ENCODE measurements at regions of chr9 and their contacts with region 1.

Region 1: DNA sequence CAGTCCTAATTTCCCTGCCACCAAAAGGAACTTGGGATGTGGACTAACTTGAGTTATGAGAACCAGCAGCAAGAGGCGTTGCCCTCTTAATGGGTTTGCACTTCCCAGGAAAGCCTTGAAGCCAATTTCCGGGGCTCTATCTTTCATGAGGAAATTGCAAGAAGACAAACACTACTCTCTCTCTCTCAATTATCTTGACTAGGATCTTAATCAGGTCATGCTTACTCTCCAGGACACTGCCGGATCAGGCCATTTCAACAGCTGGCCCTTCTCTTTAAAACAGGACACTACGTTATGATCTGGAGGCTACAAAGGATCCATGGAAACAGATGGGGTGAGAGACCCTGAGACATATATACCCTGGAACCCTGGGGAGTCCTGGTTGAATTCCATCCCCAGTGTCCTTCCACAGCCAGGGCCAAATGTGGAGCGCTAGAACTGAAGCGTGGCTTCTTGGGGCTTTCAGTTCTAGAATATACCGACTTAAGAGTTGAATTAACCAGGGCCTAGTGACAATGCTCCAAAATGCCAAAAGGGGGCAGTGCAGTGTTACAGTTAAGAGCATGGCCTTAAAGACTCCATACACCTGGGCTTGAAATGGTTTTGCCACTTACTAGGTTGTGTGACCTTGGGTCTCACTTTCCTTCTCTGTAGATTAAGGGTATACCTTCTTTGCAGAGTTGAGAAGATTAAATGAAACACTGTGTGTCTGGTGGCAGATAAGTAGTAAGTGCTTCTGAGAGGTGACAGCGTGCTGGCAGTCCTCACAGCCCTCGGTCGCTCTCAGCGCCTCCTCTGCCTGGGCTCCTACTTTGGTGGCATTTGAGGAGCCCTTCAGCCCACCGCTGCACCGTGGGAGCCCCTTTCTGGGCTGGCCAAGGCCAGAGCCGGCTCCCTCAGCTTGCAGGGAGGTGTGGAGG is 21.1 kb downstream of the FAM219A start:
- DNase-seq: peak; percentile 79
- ATAC-seq: peak; percentile 92
- H3K4me3 ChIP-seq: no peak overlapping the region
- H3K27ac ChIP-seq: no peak overlapping the region
- H3K4me1 ChIP-seq: peaks cover 7% of the 10 kb centered on the region
- H3K27me3 ChIP-seq: no peaks in the 10 kb centered on the region
- CTCF ChIP-seq: peak; percentile 84
- POLR2A ChIP-seq: 0 out of 2 replicates have a peak, but pooled peaks have one; percentile 33
- RAD21 ChIP-seq: peak; percentile 88

Region 2: GRCh38 chr9:34271265-34272006 is 165.8 kb before region 1 on chr9:
- CTCF ChIA-PET with region 1: no interaction called
- POLR2A ChIA-PET with region 1: no interaction called
- dilution Hi-C with region 1: no loop called
- in situ Hi-C with region 1: no loop called
- intact Hi-C with region 1: no loop called
- DNase-seq: no peak
- ATAC-seq: no peak
- H3K4me3 ChIP-seq: no peak overlapping the region
- H3K27ac ChIP-seq: no peak overlapping the region
- H3K4me1 ChIP-seq: no peaks in the 10 kb centered on the region
- H3K27me3 ChIP-seq: no peaks in the 10 kb centered on the region
- CTCF ChIP-seq: no peak
- POLR2A ChIP-seq: no peak
- RAD21 ChIP-seq: no peak

Region 3: GRCh38 chr9:34500623-34501267 is 63.5 kb after region 1 on chr9:
- CTCF ChIA-PET with region 1: interaction called, 3 read pairs
- POLR2A ChIA-PET with region 1: no interaction called
- dilution Hi-C with region 1: no loop called
- in situ Hi-C with region 1: loop called (anchors 10 kb)
- intact Hi-C with region 1: loop called (anchors 1 kb)
- DNase-seq: peak; percentile 19
- ATAC-seq: peak; percentile 80
- H3K4me3 ChIP-seq: no peak overlapping the region
- H3K27ac ChIP-seq: no peak overlapping the region
- H3K4me1 ChIP-seq: no peaks in the 10 kb centered on the region; the same call in 1 of the 2 replicates
- H3K27me3 ChIP-seq: peaks cover 53% of the 10 kb centered on the region
- CTCF ChIP-seq: peak; percentile 89
- POLR2A ChIP-seq: no peak
- RAD21 ChIP-seq: peak; percentile 84

Region 4: DNA sequence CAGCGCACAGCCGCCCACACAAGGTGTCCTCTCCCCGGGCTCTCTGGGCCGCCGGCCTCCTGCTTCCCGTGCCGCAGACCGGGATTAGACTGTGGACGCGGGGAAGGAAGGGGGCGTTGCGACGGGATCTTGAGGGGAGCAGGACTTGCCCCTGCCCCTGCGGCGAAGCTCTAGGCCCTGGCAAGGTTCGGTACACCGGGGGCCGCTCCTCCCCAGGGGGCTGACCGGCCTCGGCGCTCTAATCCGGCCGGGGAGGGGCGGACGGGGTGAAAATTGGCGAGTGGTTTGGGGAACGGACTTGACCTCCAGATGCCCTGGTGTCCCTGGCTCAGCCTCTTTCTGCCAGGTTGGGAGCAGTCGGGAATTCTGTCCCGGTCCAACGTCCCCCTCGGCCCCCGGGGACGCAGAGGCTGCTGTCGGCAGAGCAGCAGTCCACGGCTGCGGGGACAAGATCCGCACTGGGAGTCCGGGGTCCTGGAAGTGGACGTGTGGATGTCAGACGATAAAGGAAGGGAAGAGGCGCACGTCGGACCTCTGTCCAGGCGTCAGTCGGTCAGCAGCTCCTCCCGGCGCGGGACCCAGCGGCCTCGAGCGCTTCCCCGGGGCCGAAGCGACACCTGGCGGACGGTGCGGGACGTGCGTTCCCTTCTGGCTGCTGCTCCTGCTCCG is 154.1 kb after region 1 on chr9:
- CTCF ChIA-PET with region 1: interaction called, 3 read pairs
- POLR2A ChIA-PET with region 1: no interaction called
- dilution Hi-C with region 1: no loop called
- in situ Hi-C with region 1: no loop called
- intact Hi-C with region 1: loop called (anchors 1 kb)
- DNase-seq: peak; percentile 60
- ATAC-seq: peak; percentile 97
- H3K4me3 ChIP-seq: no peak overlapping the region
- H3K27ac ChIP-seq: no peak overlapping the region
- H3K4me1 ChIP-seq: no peaks in the 10 kb centered on the region; the same call in 1 of the 2 replicates
- H3K27me3 ChIP-seq: peaks cover 85% of the 10 kb centered on the region
- CTCF ChIP-seq: peak; percentile 93
- POLR2A ChIP-seq: no peak
- RAD21 ChIP-seq: peak; percentile 92

Measured in IMR-90 (cell line).